PC-9 (cell line): ENCODE measurements at regions of chr1 and their contacts with region 1.

Region 1: GRCh38 chr1:217238945-217239344 is 391.9 kb downstream of the GPATCH2 start:
- DNase-seq: no peak
- H3K4me3 ChIP-seq: no peak overlapping the region
- H3K27ac ChIP-seq: no peak overlapping the region
- H3K4me1 ChIP-seq: no peaks in the 10 kb centered on the region
- H3K27me3 ChIP-seq: no peaks in the 10 kb centered on the region
- CTCF ChIP-seq: no peak

Region 2: DNA sequence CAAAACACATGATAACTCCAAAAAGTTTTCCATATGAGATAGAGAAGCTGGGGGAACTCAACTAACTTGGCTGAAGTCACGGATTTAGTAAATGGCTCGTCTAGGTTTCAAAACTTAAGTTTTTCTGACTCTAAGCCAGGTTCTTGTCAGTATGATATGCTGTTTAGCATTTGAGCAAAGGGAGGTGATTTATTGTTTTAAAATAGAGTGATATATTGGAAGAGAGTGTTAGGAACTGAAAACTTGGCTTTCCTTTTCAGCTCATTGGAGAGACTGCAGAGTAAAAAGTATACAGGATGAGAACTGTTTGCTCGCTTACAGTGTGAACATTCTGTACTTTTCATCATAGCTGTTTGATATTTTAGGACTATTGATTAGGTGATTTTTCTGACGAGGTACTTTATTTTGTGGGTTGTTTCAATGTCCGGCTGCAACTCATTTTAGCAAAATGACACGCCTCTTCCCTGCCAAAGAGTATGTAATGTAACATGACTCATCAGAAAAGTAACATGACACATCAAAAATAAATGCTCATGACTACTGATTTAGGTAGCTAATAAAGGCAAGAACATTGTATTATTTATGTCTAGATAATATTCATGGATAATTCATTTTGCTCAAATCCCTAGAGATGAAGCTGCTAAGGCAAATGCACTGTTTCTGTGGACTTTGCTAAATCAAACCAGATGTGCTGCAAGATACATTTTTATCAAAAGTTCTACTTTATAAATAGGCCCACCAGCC is 36.9 kb after region 1 on chr1:
- CTCF ChIA-PET with region 1: no interaction called
- POLR2A ChIA-PET with region 1: no interaction called
- intact Hi-C with region 1: loop called (anchors 2 kb)
- DNase-seq: no peak
- H3K4me3 ChIP-seq: no peak overlapping the region
- H3K27ac ChIP-seq: no peak overlapping the region
- H3K4me1 ChIP-seq: no peaks in the 10 kb centered on the region
- H3K27me3 ChIP-seq: no peaks in the 10 kb centered on the region
- CTCF ChIP-seq: no peak

Region 3: DNA sequence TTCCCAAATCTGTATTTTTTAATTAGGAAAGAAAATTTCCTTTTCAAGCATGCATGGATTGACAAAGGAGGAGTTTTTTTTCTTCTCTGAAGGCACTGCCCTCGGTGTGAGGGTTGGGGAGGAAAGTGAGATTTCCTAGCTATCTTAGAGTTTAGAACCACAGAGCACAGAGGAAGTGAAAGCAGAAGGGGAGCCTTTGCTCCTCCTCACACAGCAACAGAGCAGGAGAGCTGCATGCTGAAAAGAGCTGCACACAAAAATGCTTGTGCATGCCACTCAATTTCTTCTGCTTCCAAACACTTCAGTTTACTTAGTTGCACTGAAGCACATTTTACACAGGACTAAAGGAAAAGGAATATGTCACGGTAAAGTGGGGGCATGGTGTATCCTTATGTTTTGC is 83.9 kb after region 1 on chr1:
- CTCF ChIA-PET with region 1: no interaction called
- POLR2A ChIA-PET with region 1: no interaction called
- intact Hi-C with region 1: no loop called
- DNase-seq: no peak
- H3K4me3 ChIP-seq: no peak overlapping the region
- H3K27ac ChIP-seq: no peak overlapping the region
- H3K4me1 ChIP-seq: no peaks in the 10 kb centered on the region
- H3K27me3 ChIP-seq: no peaks in the 10 kb centered on the region
- CTCF ChIP-seq: no peak

Region 4: GRCh38 chr1:217343914-217344313 is 105.0 kb after region 1 on chr1:
- CTCF ChIA-PET with region 1: no interaction called
- POLR2A ChIA-PET with region 1: no interaction called
- intact Hi-C with region 1: no loop called
- DNase-seq: no peak
- H3K4me3 ChIP-seq: no peak overlapping the region
- H3K27ac ChIP-seq: no peak overlapping the region
- H3K4me1 ChIP-seq: no peaks in the 10 kb centered on the region
- H3K27me3 ChIP-seq: no peaks in the 10 kb centered on the region
- CTCF ChIP-seq: no peak